Activated CD4-positive, alpha-beta T cell treated with anti-CD3 and anti-CD28 coated beads for 36 hours (primary cell): ENCODE measurements at regions of chr11 and their contacts with region 1.

Region 1: GRCh38 chr11:85154294-85154693 is 472.9 kb downstream of the DLG2 start:
- DNase-seq: no peak
- ATAC-seq: no peak
- H3K4me3 Mint-ChIP-seq: no peak overlapping the region
- H3K27ac Mint-ChIP-seq: no peak overlapping the region
- H3K4me1 Mint-ChIP-seq: no peaks in the 10 kb centered on the region
- H3K27me3 Mint-ChIP-seq: no peaks in the 10 kb centered on the region

Region 2: GRCh38 chr11:85132851-85133585 is 21.3 kb before region 1 on chr11:
- CTCF ChIA-PET with region 1: no interaction called
- POLR2A ChIA-PET with region 1: no interaction called
- intact Hi-C with region 1: loop called in 1 of 2 experiments (anchors 2 kb)
- DNase-seq: no peak
- ATAC-seq: no peak
- H3K4me3 Mint-ChIP-seq: no peak overlapping the region
- H3K27ac Mint-ChIP-seq: no peak overlapping the region
- H3K4me1 Mint-ChIP-seq: no peaks in the 10 kb centered on the region
- H3K27me3 Mint-ChIP-seq: no peaks in the 10 kb centered on the region

Region 3: DNA sequence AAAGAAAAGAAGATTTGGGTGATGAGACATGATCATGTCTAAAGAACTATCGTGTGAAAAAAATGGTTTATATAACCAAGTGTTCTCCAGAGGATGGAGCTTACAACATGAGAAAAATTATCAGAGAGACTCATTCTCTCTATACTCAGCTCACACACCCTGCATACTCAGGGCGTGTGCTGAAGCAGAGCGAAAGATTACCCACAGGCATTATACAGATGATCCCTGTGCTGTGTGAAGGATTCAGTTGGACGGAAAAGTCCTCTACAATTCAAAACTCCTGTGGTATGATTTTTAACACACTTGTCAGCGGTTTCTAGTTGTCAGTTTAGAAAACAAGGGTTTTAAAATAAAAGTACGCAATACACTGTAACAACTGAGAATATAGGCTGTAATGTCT is 205.6 kb after region 1 on chr11:
- CTCF ChIA-PET with region 1: no interaction called
- POLR2A ChIA-PET with region 1: no interaction called
- intact Hi-C with region 1: no loop called
- DNase-seq: no peak
- ATAC-seq: no peak
- H3K4me3 Mint-ChIP-seq: no peak overlapping the region
- H3K27ac Mint-ChIP-seq: no peak overlapping the region
- H3K4me1 Mint-ChIP-seq: no peaks in the 10 kb centered on the region
- H3K27me3 Mint-ChIP-seq: no peaks in the 10 kb centered on the region